WTC11 (cell line): ENCODE measurements at regions of chr11 and their contacts with region 1.

Region 1: GRCh38 chr11:78021611-78022010 is 1.5 kb downstream of the KCTD14 start:
- DNase-seq: no peak
- ATAC-seq: no peak
- H3K4me3 Mint-ChIP-seq: no peak overlapping the region
- H3K27ac Mint-ChIP-seq: no peak overlapping the region
- H3K4me1 Mint-ChIP-seq: peaks cover 24% of the 10 kb centered on the region
- H3K27me3 Mint-ChIP-seq: no peaks in the 10 kb centered on the region; the same call in 1 of the 2 replicates
- CTCF ChIP-seq: no peak

Region 2: DNA sequence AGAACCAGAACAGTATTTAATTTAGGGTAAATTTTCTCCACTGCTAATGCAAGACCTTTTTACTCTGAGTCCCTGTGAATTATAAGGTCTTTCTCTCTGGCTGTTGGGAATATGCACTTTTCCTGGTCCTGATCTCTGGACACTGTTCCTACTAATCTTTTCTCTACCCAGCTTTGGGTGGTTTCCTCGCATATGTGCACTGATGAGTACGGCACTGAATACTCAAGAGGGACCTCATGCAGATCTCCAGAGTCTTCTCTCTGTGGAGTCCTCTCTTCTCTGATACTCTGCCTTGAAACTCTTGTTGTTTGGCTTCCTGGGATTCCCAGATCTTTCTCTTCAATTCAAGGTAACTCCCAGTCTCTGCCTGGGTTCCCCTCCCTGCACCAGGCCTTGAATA is 12.5 kb before region 1 on chr11:
- CTCF ChIA-PET with region 1: no interaction called
- POLR2A ChIA-PET with region 1: no interaction called
- DNase-seq: no peak
- ATAC-seq: no peak
- H3K4me3 Mint-ChIP-seq: no peak overlapping the region
- H3K27ac Mint-ChIP-seq: no peak overlapping the region
- H3K4me1 Mint-ChIP-seq: no peaks in the 10 kb centered on the region
- H3K27me3 Mint-ChIP-seq: no peaks in the 10 kb centered on the region
- CTCF ChIP-seq: no peak

Region 3: GRCh38 chr11:78040691-78041379 is 19.2 kb after region 1 on chr11:
- CTCF ChIA-PET with region 1: interaction called, 12 read pairs
- POLR2A ChIA-PET with region 1: no interaction called
- DNase-seq: no peak
- ATAC-seq: peak; percentile 51
- H3K4me3 Mint-ChIP-seq: no peak overlapping the region
- H3K27ac Mint-ChIP-seq: no peak overlapping the region
- H3K4me1 Mint-ChIP-seq: peaks cover 17% of the 10 kb centered on the region
- H3K27me3 Mint-ChIP-seq: peaks cover 20% of the 10 kb centered on the region
- CTCF ChIP-seq: no peak